H1 (cell line): ENCODE measurements at regions of chr16 and their contacts with region 1.

Region 1: DNA sequence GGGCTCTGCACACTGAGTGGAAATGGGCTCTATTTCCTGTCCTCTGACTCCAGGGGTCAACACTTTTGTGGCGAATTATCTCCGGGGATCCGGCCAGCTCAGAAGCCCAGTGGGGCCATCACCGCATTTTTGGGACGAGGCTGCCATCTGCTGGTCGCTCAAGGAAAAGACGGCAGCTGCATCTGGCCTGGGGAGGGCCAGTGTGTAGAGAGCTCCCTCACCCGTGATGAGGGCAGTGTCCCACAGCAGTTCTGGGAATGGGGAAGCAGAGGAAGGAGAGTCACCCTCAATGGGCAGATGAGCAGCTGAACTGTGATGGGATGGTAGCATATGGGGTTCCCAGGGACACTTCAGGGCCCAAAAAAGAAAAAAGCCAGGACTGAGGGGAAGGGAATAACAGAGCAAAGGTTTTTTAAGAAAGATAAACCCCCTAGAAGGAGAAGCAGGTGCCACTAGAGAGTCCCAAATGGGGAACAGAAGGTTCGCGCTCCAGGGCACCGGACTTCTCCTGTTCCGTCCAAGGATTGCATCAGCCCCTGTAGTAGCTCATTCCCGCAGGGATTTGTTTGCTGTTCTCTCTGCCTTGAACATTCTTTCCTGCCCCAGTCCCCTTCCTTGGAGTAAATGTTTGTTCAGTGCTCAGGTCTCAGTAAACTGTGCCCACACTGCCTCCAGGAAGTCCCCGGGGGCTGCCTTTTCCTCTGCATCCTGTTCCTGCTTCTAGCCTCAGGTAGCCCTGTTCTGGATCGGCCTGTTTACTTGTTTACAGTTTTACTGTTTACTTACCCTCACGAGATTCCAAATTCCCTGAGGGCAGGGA is 9.3 kb upstream of the ABCC12 start:
- DNase-seq: peak; percentile 49 to 89
- H3K4me3 ChIP-seq: no peak overlapping the region
- H3K27ac ChIP-seq: no peak overlapping the region
- H3K4me1 ChIP-seq: no peaks in the 10 kb centered on the region
- H3K27me3 ChIP-seq: no peaks in the 10 kb centered on the region
- CTCF ChIP-seq: peak; percentile 81 to 89 (median 86)
- EP300 ChIP-seq: no peak
- POLR2A ChIP-seq: no peak
- RAD21 ChIP-seq: peak; percentile 97 to 98

Region 2: GRCh38 chr16:48176635-48177408 is 11.7 kb after region 1 on chr16:
- CTCF ChIA-PET with region 1: interaction called, 25 read pairs
- POLR2A ChIA-PET with region 1: no interaction called
- DNase-seq: no peak
- H3K4me3 ChIP-seq: no peak overlapping the region
- H3K27ac ChIP-seq: no peak overlapping the region
- H3K4me1 ChIP-seq: no peaks in the 10 kb centered on the region
- H3K27me3 ChIP-seq: no peaks in the 10 kb centered on the region
- CTCF ChIP-seq: no peak
- EP300 ChIP-seq: no peak
- POLR2A ChIP-seq: no peak
- RAD21 ChIP-seq: no peak